ENCODE measurements at regions of chr6 and their contacts with region 1.

Region 1: DNA sequence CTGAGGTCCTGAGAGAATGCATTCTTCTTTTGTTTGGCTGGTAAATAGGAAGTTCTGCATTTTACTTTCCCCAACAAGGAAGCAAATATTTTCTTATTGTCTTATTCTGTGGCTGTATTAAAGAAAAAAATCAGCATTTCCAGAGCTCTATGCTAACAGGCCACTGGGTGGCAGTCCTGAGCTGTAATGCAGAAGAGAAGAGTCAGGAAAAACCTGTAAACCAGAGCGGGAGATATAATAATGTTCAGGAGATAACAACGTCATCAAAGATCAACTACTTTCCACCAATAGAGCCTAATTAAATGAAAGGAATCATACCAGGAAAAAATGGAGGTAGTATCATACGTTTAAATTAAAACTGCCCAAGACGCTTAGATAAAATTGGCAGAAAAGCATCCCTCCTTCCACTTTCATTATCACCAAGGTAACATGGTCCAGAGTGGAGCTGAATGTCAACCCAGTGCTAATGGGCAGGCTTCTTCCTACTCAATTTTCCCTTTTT is 55.6 kb upstream of the CARMIL1 start:
- DNase-seq: peak; percentile 30 to 42
- ATAC-seq: peak; percentile 71 to 72; a peak in 3 of 6 replicates
- H3K4me3 ChIP-seq: peak overlapping the region; percentile 30; the same call in 1 of the 3 replicates
- H3K27ac ChIP-seq: peak overlapping the region in 1 of 2 experiments; percentile 17; a peak in 1 of 6 replicates
- H3K4me1 ChIP-seq: no peaks in the 10 kb centered on the region
- CTCF ChIP-seq: peak; percentile 88
- EP300 ChIP-seq: no peak
- POLR2A ChIP-seq: no peak
- RAD21 ChIP-seq: peak; percentile 91 to 92

Region 2: GRCh38 chr6:25490018-25490801 is 266.7 kb after region 1 on chr6:
- CTCF ChIA-PET with region 1: interaction called, 15 read pairs
- POLR2A ChIA-PET with region 1: no interaction called
- DNase-seq: peak; percentile 31 to 74
- ATAC-seq: peak; percentile 95 to 96
- H3K4me3 ChIP-seq: no peak overlapping the region
- H3K27ac ChIP-seq: peak overlapping the region in 1 of 2 experiments; percentile 66; a peak in 2 of 6 replicates
- H3K4me1 ChIP-seq: peaks cover 3% of the 10 kb centered on the region; the same call in 1 of the 3 replicates
- CTCF ChIP-seq: peak; percentile 74
- EP300 ChIP-seq: no peak
- POLR2A ChIP-seq: no peak
- RAD21 ChIP-seq: peak; percentile 81 to 82

Region 3: DNA sequence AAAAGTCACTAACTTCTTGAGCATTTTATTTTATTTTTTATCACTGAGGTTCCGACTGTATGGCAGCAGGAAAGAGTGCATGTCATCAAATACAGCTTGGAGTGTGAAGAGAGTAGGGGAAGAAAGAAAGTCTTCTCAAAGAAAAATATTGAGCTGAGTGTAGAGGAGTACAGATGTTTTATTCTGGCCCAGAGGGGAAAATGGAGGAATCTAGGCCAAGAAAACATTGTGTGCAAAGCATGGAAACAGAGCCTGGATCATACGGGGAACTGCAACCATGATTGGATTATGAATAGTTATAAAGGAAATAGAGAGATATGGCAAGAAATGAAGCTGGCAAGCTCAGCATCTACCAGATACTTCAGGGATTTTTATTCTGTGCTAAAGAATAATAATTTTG is 324.3 kb after region 1 on chr6:
- CTCF ChIA-PET with region 1: interaction called, 10 read pairs
- POLR2A ChIA-PET with region 1: no interaction called
- DNase-seq: no peak
- ATAC-seq: no peak
- H3K4me3 ChIP-seq: no peak overlapping the region
- H3K27ac ChIP-seq: no peak overlapping the region
- H3K4me1 ChIP-seq: no peaks in the 10 kb centered on the region
- CTCF ChIP-seq: no peak
- EP300 ChIP-seq: no peak
- POLR2A ChIP-seq: no peak
- RAD21 ChIP-seq: no peak

Region 4: DNA sequence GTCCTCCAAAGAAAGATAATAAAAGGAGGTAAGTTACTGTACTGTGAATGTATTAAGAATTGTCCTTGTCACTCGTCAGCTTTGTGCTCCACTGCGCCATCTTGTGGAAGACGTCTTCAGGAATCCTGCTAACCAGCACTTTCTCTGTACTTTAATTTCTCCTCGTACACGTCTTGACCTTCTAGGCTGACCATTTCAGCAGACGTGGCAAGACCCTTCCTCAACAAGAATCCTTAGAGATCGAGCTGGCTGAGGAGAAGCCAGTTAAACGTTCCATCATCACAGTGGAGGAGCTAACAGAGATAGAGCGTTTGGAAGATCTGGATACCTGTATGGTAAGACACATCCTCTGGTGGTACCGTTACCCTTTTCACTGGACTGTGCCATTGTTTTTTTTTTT is 333.0 kb after region 1 on chr6:
- CTCF ChIA-PET with region 1: interaction called, 13 read pairs
- POLR2A ChIA-PET with region 1: no interaction called
- DNase-seq: peak; percentile 15 to 71
- ATAC-seq: peak; percentile 71 to 82; a peak in 4 of 6 replicates
- H3K4me3 ChIP-seq: no peak overlapping the region
- H3K27ac ChIP-seq: no peak overlapping the region
- H3K4me1 ChIP-seq: no peaks in the 10 kb centered on the region
- CTCF ChIP-seq: peak; percentile 74
- EP300 ChIP-seq: no peak
- POLR2A ChIP-seq: no peak
- RAD21 ChIP-seq: peak; percentile 53 to 59

Region 5: DNA sequence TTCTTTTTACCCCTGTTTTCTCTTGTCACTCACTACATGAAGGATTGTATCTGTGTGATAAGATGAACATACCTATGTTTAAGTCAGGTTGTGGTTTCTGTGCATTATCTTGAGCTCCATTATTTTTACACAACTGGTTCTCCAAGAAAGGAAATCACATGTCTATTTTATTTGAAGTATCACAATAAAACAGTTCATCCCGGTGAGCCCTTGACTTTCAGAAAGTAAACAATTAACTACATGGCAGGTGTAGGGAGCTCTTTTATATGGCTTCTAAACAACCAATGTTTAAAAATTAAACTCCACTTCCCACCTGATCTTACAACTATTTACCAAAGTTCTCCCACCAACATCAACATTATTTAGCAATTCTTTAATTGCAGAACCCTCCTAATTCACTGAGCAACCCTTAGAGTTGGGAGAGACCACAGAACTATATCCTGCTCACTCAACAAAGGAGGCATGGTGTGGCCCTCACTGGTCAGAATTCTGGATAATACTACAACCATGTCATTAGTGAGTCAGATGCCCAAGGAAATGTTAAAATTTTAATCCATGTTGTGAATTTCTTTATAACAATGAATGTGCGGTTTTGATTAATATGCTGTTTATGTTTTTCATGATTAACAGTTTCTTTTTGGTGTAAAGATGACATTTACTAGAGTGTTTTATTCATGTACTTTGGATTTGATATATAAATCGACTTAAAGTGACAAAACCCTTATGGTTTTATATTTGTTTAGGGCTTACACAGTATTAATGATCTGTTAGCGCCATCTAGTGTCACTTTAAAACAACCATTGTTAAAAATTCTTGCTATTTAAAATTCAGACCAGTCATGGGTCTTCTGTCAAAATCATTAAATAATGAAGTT is 378.5 kb after region 1 on chr6:
- CTCF ChIA-PET with region 1: interaction called, 11 read pairs
- POLR2A ChIA-PET with region 1: no interaction called
- DNase-seq: peak; percentile 28 to 42
- ATAC-seq: 0 out of 6 replicates have a peak, but pooled peaks of 1 of the 2 experiments have one; percentile 40
- H3K4me3 ChIP-seq: no peak overlapping the region
- H3K27ac ChIP-seq: no peak overlapping the region
- H3K4me1 ChIP-seq: 0 out of 3 replicates have a peak, but pooled peaks cover 2% of the 10 kb centered on the region
- CTCF ChIP-seq: peak; percentile 64
- EP300 ChIP-seq: no peak
- POLR2A ChIP-seq: no peak
- RAD21 ChIP-seq: peak; percentile 70 to 78

Measured in A549 (cell line).